ENCODE measurements at regions of chr3 and their contacts with region 1.

Region 1: DNA sequence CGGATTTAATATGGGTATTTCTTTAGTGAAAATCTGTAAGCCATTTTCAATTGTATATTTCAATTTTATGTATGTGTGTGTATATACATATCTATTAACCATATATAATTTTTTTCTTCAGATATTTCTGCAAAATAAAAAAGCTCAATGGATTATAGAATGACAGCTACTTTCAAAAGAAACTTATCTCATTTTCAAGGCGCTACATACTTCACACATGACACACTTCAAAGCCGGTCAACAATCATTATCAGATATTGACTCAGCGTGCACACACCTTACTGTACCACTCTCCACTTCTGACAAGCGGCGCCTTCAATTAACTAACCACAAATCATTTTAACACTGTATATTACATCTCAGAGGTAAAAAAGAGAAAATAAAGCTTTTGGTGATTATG is 39.6 kb downstream of the ATP13A3 start:
- DNase-seq: no peak
- ATAC-seq: no peak
- H3K4me3 ChIP-seq: no peak overlapping the region
- H3K27ac ChIP-seq: no peak overlapping the region
- H3K4me1 ChIP-seq: no peaks in the 10 kb centered on the region
- H3K27me3 ChIP-seq: no peaks in the 10 kb centered on the region
- CTCF ChIP-seq: no peak

Region 2: GRCh38 chr3:193788189-193788991 is 658.8 kb before region 1 on chr3:
- CTCF ChIA-PET with region 1: no interaction called
- POLR2A ChIA-PET with region 1: interaction called, 10 read pairs
- in situ Hi-C with region 1: no loop called
- intact Hi-C with region 1: no loop called
- DNase-seq: no peak
- ATAC-seq: peak; percentile 95
- H3K4me3 ChIP-seq: no peak overlapping the region
- H3K27ac ChIP-seq: peak overlapping the region; percentile 20; the same call in 1 of the 2 replicates
- H3K4me1 ChIP-seq: peaks cover 9% of the 10 kb centered on the region; the same call in 1 of the 2 replicates
- H3K27me3 ChIP-seq: no peaks in the 10 kb centered on the region
- CTCF ChIP-seq: peak; percentile 95